Panc1 (cell line): ENCODE measurements at regions of chr16 and their contacts with region 1.

Region 1: DNA sequence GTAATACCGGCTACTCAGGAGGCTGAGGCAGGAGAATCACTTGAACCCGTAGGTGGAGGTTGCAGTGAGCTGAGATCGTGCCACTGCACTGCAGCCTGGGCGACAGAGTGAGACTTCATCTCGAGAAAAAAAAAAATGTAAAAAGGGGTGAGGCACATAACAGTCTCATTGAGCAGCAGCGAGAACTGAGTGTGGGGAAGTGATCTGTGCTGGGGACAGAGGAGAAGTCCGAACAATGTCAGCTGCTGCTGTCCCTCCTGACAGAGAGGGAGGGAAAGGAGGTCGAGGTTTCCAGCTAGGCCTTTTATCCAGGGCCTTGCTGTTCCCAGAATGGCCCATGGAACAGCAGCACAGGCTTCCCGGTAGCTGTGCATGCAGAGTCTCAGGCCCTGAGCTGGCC is 14.0 kb downstream of the C16orf74 start:
- DNase-seq: no peak
- ATAC-seq: no peak
- H3K4me3 ChIP-seq: no peak overlapping the region
- H3K27ac ChIP-seq: no peak overlapping the region
- H3K4me1 ChIP-seq: no peaks in the 10 kb centered on the region
- H3K27me3 ChIP-seq: no peaks in the 10 kb centered on the region
- CTCF ChIP-seq: no peak

Region 2: GRCh38 chr16:85682516-85682915 is 54.4 kb before region 1 on chr16:
- CTCF ChIA-PET with region 1: interaction called, 19 read pairs
- POLR2A ChIA-PET with region 1: no interaction called
- in situ Hi-C with region 1: no loop called
- intact Hi-C with region 1: no loop called
- DNase-seq: no peak
- ATAC-seq: 0 out of 2 replicates have a peak, but pooled peaks have one; percentile 13
- H3K4me3 ChIP-seq: no peak overlapping the region
- H3K27ac ChIP-seq: no peak overlapping the region
- H3K4me1 ChIP-seq: peaks cover 3% of the 10 kb centered on the region; the same call in 1 of the 2 replicates
- H3K27me3 ChIP-seq: no peaks in the 10 kb centered on the region
- CTCF ChIP-seq: no peak

Region 3: DNA sequence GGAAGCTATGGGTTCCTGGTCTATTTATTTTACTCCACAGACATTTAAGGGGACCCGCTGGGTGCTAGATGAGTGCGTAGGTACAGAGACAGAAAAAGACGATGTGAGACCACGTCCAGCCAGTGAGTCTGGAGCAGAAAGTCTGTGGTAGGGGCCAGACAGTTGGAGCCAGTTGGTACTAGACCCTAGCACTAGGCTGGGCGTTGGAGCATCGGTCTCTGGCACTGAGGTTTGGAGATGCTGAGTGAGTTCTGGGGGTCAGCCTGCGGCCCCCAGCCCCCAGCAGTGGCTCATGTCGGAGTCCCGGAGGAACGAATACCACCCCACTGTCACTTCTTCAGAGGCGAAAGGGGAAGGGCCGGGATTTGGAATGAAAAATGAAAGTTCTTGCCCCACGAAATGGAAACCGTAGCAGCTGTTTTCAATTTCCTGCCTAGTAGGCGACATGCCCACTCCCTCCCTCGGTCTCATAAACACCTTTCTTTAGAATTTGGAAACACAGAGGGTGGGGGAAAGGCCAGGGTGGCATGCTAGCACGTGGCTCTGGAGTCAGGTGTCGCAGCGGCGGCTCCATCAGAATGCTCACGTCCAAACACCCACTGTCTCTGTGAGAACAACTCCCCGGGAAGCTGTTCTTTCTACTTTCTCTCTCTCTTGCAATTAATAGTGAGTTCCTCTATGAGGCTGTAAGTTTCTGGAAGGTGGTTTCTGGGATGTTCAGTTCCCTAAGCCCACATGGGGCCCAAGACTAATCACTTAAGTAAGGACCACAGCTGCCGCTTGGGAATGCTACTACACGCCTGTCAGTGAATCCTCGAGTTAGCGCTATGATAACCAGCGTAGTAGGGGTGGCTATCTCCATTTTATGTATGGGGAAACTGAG is 258.9 kb after region 1 on chr16:
- CTCF ChIA-PET with region 1: no interaction called
- POLR2A ChIA-PET with region 1: no interaction called
- in situ Hi-C with region 1: no loop called
- intact Hi-C with region 1: no loop called
- DNase-seq: no peak
- ATAC-seq: no peak
- H3K4me3 ChIP-seq: no peak overlapping the region
- H3K27ac ChIP-seq: no peak overlapping the region
- H3K4me1 ChIP-seq: no peaks in the 10 kb centered on the region
- H3K27me3 ChIP-seq: no peaks in the 10 kb centered on the region; the same call in 1 of the 2 replicates
- CTCF ChIP-seq: no peak

Region 4: DNA sequence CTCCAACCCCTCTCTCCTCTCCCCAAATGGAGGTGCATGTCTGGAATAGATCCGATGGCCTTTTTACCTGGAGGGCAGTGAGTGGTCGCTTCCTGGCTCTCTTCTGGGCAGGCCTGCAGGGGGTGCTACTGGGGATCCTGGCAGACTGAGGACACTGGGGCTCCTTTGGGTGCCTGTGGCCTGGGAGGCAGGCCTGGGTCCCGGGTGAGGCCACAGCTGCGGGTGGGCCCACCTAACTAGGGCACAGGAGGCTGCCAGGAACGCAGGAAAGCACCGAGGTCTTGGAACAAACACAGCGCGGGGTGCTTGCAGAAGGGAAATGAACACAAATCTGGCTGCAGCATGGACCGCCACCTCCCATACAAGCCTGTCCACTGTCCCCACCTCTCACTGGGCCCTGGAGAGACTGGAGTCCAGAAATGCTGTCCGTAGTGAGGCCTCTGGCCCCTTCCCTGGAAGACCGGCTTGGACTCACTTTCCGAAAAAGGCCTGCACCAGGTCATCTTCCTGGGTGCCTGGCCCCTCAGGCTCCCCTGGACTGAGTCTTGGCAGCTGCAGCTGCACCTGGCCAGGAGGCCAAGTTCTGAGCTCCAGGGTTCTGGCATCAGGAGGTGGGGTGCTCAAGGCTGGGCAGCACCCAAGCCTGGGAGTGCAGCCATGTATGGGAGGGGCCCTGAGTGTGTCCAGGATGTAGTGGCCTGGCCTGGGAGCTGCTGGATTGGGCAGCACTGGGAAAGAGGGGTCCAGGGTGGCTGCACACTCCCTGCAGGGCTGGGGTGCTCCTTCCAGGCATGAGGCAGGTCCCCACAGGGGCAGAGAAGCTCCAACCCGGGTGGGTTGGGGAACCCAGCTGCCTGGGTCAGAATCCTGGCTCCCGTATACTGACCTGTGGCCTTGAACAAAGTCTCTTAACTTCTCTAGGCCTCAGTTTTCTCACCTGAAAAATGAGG is 357.2 kb after region 1 on chr16:
- CTCF ChIA-PET with region 1: no interaction called
- POLR2A ChIA-PET with region 1: no interaction called
- in situ Hi-C with region 1: no loop called
- intact Hi-C with region 1: no loop called
- DNase-seq: no peak
- ATAC-seq: no peak
- H3K4me3 ChIP-seq: no peak overlapping the region
- H3K27ac ChIP-seq: no peak overlapping the region
- H3K4me1 ChIP-seq: no peaks in the 10 kb centered on the region
- H3K27me3 ChIP-seq: no peaks in the 10 kb centered on the region
- CTCF ChIP-seq: no peak